ENCODE measurements at regions of chrX and their contacts with region 1.

Region 1: DNA sequence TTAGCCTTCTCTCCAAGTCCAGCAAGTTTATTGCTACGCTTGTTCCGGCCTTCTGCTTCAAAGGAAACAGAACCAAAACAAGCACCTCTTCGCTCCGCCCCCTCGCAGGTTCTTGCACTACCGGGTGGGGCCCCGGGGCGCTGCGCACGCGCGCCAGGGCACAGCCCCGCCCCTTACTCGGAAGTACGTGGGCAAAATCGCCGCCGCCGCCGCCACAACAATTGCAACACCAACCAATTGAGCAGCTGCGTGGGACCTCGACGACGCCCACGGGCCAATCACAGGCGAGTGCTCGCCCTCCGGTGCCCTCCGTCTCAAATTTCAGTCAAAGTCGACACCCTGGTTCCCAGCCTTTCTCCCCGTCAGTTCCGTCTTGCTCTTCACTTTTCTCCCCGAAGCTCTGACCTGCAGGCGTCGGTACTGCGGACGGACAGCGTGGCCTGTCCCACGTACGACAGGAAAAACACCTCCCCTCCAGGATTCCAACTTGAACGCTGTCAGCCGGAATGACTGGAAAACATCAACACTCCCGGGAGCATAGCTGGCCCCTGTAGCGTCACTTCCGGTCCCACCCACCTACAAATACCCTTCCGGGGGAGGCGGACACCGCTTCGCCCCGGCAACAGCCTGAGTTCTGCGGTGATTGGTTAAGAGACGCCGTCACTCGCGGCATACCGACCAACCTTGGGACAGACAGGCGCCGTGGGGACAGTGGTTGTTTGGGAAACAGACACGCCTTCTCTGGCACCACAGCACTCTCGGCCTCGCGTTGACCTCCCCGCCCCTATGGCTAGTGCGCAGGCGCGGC is 624 bp upstream of the OTUD5 start:
- DNase-seq: peak; percentile 92 to 98 (median 96)
- H3K4me3 ChIP-seq: peak overlapping the region; percentile 47 to 75
- H3K4me3 Mint-ChIP-seq: peak overlapping the region; percentile 96 to 99 (median 98)
- H3K27ac ChIP-seq: peak overlapping the region; percentile 98
- H3K27ac Mint-ChIP-seq: peak overlapping the region; percentile 98 to 100 (median 100)
- H3K4me1 ChIP-seq: peaks cover 49% of the 10 kb centered on the region
- H3K4me1 Mint-ChIP-seq: peaks cover 14 to 64% (median 38%) of the 10 kb centered on the region in 4 donors
- H3K27me3 ChIP-seq: no peaks in the 10 kb centered on the region
- H3K27me3 Mint-ChIP-seq: no peaks in the 10 kb centered on the region

Region 2: DNA sequence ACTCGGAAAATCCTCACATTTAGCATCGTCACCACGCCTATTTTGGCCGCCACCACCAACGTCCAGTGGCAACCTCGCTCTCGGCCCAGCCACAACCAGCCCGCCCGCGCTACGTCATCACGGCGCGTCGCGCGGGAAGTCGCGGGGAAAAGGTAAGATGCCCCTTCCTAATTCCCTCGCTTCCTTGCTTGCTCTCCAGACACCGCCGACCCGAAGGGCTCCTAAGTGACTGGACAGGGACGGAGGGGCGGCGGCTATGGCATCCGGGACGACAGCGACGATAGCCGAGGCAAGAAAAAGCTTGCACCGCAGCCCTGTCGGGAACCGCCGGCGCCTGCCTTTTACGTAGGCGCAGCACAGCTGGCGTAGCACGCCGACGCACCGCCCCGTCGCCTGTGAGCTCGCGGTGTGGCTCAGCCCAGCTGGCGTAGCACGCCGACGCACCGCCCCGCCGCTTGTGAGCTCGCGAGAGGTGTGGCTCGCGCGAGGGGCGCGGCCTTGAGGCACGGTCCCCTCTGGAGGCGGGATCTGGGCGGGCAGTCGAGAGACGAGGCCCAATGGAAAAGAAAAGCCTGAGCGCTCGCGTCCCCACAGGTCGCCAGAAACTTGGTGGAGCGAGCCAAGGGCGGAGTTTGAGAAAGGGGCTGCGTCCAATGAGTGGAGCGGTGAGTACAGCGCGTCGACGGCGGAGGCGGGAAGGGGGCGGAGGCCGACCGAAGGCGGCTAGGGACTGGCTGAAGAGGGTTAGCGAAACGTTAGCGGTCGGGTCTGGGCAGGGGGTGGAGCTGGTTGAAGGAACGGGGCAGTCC is 156.5 kb before region 1 on chrX and contains the start of gene HDAC6:
- CTCF ChIA-PET with region 1: no interaction called
- POLR2A ChIA-PET with region 1: interaction called, 10 read pairs
- intact Hi-C with region 1: loop called (anchors 1 kb)
- DNase-seq: peak; percentile 91 to 98 (median 97)
- H3K4me3 ChIP-seq: peak within 1 kb of the TSS; percentile 65 to 77
- H3K4me3 Mint-ChIP-seq: peak within 1 kb of the TSS; percentile 94 to 98 (median 96)
- H3K27ac ChIP-seq: peak within 1 kb of the TSS; percentile 87
- H3K27ac Mint-ChIP-seq: peak within 1 kb of the TSS; percentile 90 to 99 (median 99)
- H3K4me1 ChIP-seq: peaks cover 16% of the 10 kb centered on the region
- H3K4me1 Mint-ChIP-seq: peaks cover 3 to 25% (median 16%) of the 10 kb centered on the region in 4 donors
- H3K27me3 ChIP-seq: no peaks in the 10 kb centered on the region
- H3K27me3 Mint-ChIP-seq: no peaks in the 10 kb centered on the region
- total RNA-seq, gene HDAC6: 121 to 126 TPM

Region 3: DNA sequence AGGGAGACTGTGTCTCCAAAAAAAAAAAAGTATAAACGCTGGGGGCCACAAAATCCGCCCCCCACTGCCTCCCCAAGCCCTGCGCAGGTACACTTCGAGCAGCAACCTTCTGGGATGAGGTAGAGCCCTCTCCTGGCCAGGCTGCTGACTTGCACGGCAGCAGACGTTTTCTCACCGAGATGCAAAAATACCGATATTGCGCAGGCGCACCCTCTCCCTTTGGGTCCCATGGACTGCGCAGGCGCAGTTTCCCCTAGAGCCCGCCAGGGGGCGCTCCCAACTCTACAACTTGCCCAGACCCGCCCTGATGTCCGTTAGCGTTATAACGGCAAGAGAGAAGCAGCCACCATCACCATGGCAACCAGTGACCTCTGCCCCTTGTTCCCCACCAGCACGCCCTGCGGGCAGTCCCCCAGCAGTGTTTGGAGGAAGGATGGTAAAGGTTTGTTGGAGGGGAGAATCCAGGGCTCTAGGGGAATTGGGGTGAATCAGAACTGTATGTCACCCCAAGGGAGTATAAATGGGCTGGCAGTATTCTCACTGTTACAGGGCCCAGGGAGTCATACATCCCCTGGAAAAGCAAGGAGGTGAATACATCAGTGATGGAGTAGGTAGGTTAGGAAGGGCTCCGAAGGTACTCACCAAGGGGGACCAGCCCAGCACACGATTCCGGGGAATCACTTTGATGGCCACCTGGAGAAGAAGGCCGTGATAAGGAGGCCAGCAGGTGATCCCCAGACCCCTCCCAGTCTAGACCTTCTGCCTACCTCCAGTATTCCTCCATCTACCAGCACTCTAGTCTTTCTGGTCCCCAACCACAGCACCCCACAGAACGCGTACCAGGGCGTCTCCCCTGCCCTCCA is 40.7 kb before region 1 on chrX:
- CTCF ChIA-PET with region 1: no interaction called
- POLR2A ChIA-PET with region 1: interaction called, 47 read pairs
- intact Hi-C with region 1: loop called (anchors 1 kb)
- DNase-seq: peak; percentile 90 to 93 (median 92)
- H3K4me3 ChIP-seq: peak overlapping the region; percentile 91 to 98
- H3K4me3 Mint-ChIP-seq: peak overlapping the region; percentile 93 to 98 (median 96)
- H3K27ac ChIP-seq: peak overlapping the region; percentile 88
- H3K27ac Mint-ChIP-seq: peak overlapping the region; percentile 87 to 97 (median 95)
- H3K4me1 ChIP-seq: peaks cover 67% of the 10 kb centered on the region
- H3K4me1 Mint-ChIP-seq: peaks cover 27 to 85% (median 56%) of the 10 kb centered on the region in 4 donors
- H3K27me3 ChIP-seq: no peaks in the 10 kb centered on the region
- H3K27me3 Mint-ChIP-seq: no peaks in the 10 kb centered on the region

Region 4: GRCh38 chrX:48972220-48973167 is 14.5 kb after region 1 on chrX:
- CTCF ChIA-PET with region 1: interaction called, 9 read pairs
- POLR2A ChIA-PET with region 1: interaction called, 19 read pairs
- intact Hi-C with region 1: no loop called
- DNase-seq: peak in 3 of 5 donors; percentile 12 to 27 (median 23)
- H3K4me3 ChIP-seq: no peak overlapping the region
- H3K4me3 Mint-ChIP-seq: peak overlapping the region; percentile 25 to 71 (median 62)
- H3K27ac ChIP-seq: no peak overlapping the region
- H3K27ac Mint-ChIP-seq: peak overlapping the region in 6 of 7 donors; percentile 7 to 82 (median 42)
- H3K4me1 ChIP-seq: peaks cover 9% of the 10 kb centered on the region
- H3K4me1 Mint-ChIP-seq: peaks cover 7 to 23% (median 11%) of the 10 kb centered on the region in 4 donors
- H3K27me3 ChIP-seq: no peaks in the 10 kb centered on the region
- H3K27me3 Mint-ChIP-seq: no peaks in the 10 kb centered on the region

Region 5: GRCh38 chrX:49079489-49080428 is 121.7 kb after region 1 on chrX and contains the start of gene WDR45:
- CTCF ChIA-PET with region 1: no interaction called
- POLR2A ChIA-PET with region 1: interaction called, 14 read pairs
- intact Hi-C with region 1: no loop called
- DNase-seq: peak; percentile 64 to 85 (median 71)
- H3K4me3 ChIP-seq: peak within 1 kb of the TSS; percentile 47 to 80
- H3K4me3 Mint-ChIP-seq: peak within 1 kb of the TSS; percentile 89 to 97 (median 96)
- H3K27ac ChIP-seq: peak within 1 kb of the TSS; percentile 96
- H3K27ac Mint-ChIP-seq: peak within 1 kb of the TSS; percentile 97 to 99 (median 99)
- H3K4me1 ChIP-seq: peaks cover 8% of the 10 kb centered on the region
- H3K4me1 Mint-ChIP-seq: peaks cover 4 to 15% (median 10%) of the 10 kb centered on the region in 4 donors
- H3K27me3 ChIP-seq: no peaks in the 10 kb centered on the region
- H3K27me3 Mint-ChIP-seq: no peaks in the 10 kb centered on the region
- total RNA-seq, gene WDR45: 102 to 126 TPM